Activated CD4-positive, alpha-beta memory T cell treated with anti-CD3 and anti-CD28 coated beads, Interleukin-2, amount 10 ng/mL, durations not matched to agents 7 days and 5 days (primary cell): ENCODE measurements at regions of chr3 and their contacts with region 1.

Region 1: GRCh38 chr3:72818092-72818773 is 30.0 kb downstream of the SHQ1 start:
- DNase-seq: no peak
- H3K4me3 Mint-ChIP-seq: no peak overlapping the region
- H3K27ac Mint-ChIP-seq: no peak overlapping the region
- H3K4me1 Mint-ChIP-seq: peaks cover 14% of the 10 kb centered on the region
- H3K27me3 Mint-ChIP-seq: no peaks in the 10 kb centered on the region

Region 2: DNA sequence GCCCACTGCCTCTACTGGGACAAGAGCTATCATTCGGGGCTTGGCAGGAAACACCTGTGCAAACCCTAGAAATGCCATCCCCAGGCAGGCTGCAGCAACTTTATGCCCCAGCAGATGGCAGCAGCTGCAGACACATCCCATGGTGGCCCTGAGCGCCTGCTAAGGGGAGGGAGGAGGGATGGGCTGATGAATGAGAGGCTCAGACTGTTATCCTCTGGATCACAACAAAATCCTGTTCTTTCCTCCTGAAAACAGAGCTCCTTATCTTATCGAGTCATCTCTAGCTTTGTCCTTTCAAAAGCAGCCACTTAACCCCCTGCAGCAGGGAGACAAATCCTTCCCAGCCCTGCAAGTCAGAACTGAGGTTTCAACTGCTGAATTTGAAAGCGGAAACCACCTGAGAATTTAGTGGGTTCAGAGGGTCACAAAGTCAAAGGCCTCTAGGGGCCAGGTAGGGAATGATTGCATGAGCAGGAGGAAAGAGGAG is 942.7 kb before region 1 on chr3:
- CTCF ChIA-PET with region 1: interaction called, 71 read pairs
- POLR2A ChIA-PET with region 1: no interaction called
- DNase-seq: peak; percentile 83
- H3K4me3 Mint-ChIP-seq: no peak overlapping the region
- H3K27ac Mint-ChIP-seq: peak overlapping the region; percentile 21
- H3K4me1 Mint-ChIP-seq: peaks cover 33% of the 10 kb centered on the region
- H3K27me3 Mint-ChIP-seq: peaks cover 2% of the 10 kb centered on the region

Region 3: DNA sequence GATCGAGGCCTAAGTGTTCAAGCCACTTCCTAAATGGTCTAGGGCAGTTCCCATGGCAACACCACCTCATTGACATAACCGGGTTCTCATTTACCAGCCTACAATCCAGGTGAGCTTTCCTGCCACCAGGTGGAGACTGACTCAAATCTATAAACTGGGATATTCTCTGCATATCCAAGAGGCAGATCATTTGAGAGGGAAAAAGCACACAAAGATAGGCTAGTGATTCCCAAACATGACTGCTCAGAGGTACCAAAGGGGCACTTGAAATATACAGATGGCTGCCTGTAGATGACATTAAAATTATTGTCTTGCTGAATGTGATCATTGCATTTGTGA is 892.0 kb before region 1 on chr3:
- CTCF ChIA-PET with region 1: interaction called, 10 read pairs
- POLR2A ChIA-PET with region 1: no interaction called
- DNase-seq: no peak
- H3K4me3 Mint-ChIP-seq: no peak overlapping the region
- H3K27ac Mint-ChIP-seq: no peak overlapping the region
- H3K4me1 Mint-ChIP-seq: no peaks in the 10 kb centered on the region
- H3K27me3 Mint-ChIP-seq: peaks cover 3% of the 10 kb centered on the region

Region 4: DNA sequence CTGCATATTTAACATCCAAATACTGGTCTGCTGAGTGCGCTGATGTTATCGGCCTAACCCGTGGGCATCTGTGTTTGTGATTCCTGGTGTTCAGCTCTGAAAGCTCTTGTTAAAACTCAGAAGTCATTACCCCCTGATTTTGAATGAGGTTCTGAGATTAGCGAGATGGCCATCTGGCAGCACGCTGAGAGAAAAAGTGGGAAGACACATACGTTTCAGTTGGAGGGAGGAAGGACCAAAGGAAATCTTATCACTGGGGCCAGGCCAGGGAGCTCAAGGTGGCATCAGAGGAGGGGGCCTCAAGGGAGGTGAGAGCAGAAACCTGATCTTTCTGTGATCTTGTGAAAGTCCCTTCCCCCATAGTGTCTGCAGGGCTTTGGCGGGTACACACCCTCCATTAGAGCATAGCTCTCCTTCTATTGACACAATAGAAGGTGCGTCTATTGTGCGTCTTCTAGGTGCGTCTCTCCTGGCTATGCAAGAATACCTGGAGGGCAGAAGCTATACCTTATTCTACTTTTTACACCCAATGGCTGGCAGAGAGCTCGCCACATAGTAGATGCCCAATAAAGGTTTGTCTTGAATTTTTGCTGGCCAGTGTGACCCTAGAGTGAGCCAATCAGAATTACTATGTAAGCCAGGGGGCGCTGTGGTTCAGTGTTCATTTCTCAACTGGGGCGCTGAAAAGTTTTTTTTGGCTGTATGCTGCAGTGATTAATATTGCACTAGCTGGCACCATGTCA is 152.4 kb before region 1 on chr3:
- CTCF ChIA-PET with region 1: interaction called, 78 read pairs
- POLR2A ChIA-PET with region 1: interaction called, 3 read pairs
- DNase-seq: peak; percentile 53
- H3K4me3 Mint-ChIP-seq: no peak overlapping the region
- H3K27ac Mint-ChIP-seq: no peak overlapping the region
- H3K4me1 Mint-ChIP-seq: no peaks in the 10 kb centered on the region
- H3K27me3 Mint-ChIP-seq: no peaks in the 10 kb centered on the region

Region 5: DNA sequence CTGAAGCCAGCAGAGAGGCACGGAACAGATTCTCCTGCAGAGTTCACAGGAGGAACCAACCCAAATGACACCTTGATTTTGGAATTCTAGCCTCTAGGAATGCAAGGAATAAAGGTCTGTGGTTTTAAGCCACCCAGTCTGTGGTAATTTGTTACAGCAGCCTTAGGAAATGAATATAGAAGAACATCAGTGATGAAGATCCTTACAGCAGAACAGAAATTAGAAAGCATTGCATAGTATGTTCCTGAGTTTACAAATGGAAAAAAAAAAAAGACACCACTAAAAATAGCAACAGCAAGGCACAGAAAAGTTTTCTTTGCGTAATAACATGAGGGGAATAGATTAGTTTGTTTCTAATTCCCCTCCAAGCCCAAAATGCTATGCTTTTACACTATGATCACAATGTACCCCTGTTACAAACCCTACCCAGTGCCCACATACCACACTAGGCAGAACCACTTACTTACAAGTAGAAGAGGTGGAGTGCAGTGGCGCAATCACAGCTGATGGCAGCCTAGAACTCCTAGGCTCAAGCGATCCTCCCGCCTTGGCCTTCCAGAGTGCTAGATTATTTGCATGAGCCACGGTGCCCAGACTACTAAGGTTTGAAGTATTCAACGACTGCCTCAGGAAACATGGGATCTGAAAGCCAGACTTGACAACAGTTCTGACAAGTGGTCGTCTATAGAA is 54.3 kb before region 1 on chr3:
- CTCF ChIA-PET with region 1: no interaction called
- POLR2A ChIA-PET with region 1: no interaction called
- DNase-seq: no peak
- H3K4me3 Mint-ChIP-seq: no peak overlapping the region
- H3K27ac Mint-ChIP-seq: no peak overlapping the region
- H3K4me1 Mint-ChIP-seq: peaks cover 8% of the 10 kb centered on the region
- H3K27me3 Mint-ChIP-seq: no peaks in the 10 kb centered on the region

Region 6: DNA sequence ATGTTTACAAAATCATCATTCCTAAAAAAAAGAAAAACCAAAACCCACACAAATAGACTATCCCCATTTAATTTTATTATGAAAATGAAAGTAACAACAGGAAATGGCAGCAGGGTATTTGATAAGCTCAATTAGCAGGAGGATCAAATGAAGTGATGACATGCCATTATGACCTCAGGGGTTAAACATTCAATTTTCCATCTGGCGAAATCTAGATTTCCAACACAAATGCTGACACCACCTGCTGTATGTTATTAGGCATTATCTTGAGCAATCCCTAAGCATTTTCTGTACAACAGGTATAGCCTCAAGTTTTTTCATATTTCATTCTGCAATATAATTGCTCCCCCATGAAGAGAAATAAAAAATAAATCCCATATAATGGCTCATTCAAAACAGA is 27.1 kb before region 1 on chr3:
- CTCF ChIA-PET with region 1: no interaction called
- POLR2A ChIA-PET with region 1: no interaction called
- DNase-seq: no peak
- H3K4me3 Mint-ChIP-seq: no peak overlapping the region
- H3K27ac Mint-ChIP-seq: no peak overlapping the region
- H3K4me1 Mint-ChIP-seq: peaks cover 8% of the 10 kb centered on the region
- H3K27me3 Mint-ChIP-seq: no peaks in the 10 kb centered on the region

Region 7: DNA sequence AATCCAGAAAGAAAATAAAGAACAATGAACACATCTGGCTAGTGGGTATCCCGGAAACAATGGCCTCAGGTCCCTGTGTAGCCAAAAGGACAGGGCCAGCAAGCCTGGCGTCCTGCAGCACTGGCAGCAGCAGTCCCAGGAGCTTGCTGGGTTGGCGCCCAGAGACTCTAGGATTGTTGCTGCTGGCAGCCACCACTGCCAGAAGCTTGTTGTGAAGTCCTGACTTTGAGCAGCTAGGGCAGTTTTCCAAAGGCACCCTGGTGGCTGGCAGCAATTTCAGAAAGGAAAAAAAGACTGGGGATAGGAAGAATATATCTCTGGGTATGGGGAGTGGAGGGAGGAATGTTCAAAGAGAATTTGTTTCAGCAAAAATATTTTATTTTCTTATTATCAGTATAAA is 18.7 kb after region 1 on chr3:
- CTCF ChIA-PET with region 1: interaction called, 14 read pairs
- POLR2A ChIA-PET with region 1: no interaction called
- DNase-seq: no peak
- H3K4me3 Mint-ChIP-seq: no peak overlapping the region
- H3K27ac Mint-ChIP-seq: no peak overlapping the region
- H3K4me1 Mint-ChIP-seq: no peaks in the 10 kb centered on the region
- H3K27me3 Mint-ChIP-seq: no peaks in the 10 kb centered on the region